SK-N-SH (cell line): ENCODE measurements at regions of chrX and their contacts with region 1.

Region 1: GRCh38 chrX:47144626-47145394 is at the starts of genes NDUFB11 and RBM10:
- DNase-seq: peak; percentile 87
- H3K4me3 ChIP-seq: peak within 1 kb of the TSS; percentile 57 to 77
- H3K27ac ChIP-seq: peak within 1 kb of the TSS; percentile 94 to 98
- H3K4me1 ChIP-seq: peaks cover 0 to 14% of the 10 kb centered on the region in 2 experiments; a peak in 1 of 4 replicates
- H3K27me3 ChIP-seq: no peaks in the 10 kb centered on the region
- CTCF ChIP-seq: peak; percentile 63
- EP300 ChIP-seq: no peak
- RAD21 ChIP-seq: no peak
- polyA plus RNA-seq, gene NDUFB11: 74.9 and 107 TPM in 2 replicates
- polyA plus RNA-seq, gene RBM10: 24.7 and 34.4 TPM in 2 replicates

Region 2: DNA sequence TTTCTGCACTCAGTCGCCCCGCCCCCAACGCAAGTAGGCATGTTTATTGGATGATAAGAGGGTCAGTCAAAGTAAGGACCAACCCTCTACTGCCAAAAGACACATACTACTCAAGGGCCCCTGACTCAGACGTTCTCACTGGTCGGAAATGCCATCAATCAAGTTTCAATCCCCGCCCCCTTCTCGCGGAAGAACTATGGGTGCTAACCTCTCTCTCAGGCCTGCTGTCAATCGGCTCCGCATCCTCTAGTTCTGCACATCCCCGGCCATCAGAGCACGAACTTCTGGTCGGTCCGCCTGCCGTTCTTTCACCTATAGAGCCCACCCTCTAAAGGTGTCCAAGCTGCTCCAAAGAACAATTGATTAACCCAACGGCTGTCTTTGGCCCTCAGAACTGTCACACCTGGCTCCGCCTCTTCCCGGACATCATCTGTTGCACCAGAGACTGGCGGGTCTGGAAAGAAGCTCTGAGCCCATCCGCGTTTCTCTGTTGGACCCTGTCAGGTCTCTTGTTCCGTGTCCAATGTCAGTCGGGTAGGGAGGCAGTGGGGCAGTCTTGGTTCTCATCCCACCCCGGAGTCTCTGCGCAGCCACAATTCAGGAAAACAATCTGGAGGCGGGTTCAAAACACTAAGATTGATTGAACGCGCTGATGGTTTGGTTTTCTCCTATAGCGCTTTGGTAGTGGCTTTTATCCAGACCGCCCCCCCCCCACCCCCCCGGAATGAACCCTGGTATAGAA is 15.5 kb before region 1 on chrX:
- CTCF ChIA-PET with region 1: interaction called, 9 read pairs
- POLR2A ChIA-PET with region 1: interaction called, 19 read pairs
- DNase-seq: peak; percentile 82
- H3K4me3 ChIP-seq: peak overlapping the region; percentile 50 to 70
- H3K27ac ChIP-seq: peak overlapping the region; percentile 64 to 82
- H3K4me1 ChIP-seq: peaks cover 0 to 2% of the 10 kb centered on the region in 2 experiments; a peak in 1 of 4 replicates
- H3K27me3 ChIP-seq: peaks cover 8% of the 10 kb centered on the region; the same call in 1 of the 2 replicates
- CTCF ChIP-seq: no peak
- EP300 ChIP-seq: no peak
- RAD21 ChIP-seq: no peak